K562 (cell line): ENCODE measurements at regions of chr5 and their contacts with region 1.

Region 1: DNA sequence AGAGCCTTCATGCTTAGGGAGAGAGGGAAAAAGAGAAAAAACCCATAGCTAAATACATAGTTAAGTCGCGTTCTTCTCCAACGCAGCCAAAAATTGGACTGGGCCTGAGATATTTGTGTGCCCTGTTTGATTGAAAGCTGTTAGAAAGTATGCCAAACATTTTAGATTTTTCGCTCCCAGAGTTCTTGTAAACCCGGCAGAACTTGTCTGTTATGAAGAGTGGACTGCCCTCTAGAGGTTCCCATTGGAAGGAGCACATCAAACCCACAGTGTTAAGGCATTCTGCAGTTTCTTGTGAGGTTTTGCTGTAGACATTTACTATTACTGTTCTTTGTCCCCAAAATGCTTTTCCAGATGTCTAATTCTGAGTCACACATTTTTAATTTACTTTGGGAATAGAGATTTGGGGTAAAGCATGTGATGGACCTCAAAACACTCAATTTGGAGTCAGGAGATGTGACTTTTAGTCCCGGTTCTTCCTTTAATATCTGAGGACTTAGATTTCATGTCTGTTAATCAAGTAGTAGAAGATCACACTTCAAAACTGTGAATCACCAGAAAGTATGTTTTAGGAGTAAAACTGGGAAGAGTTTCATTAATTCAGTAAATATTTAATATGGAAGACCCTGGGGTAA is 96.6 kb downstream of the PCSK1 start:
- DNase-seq: peak; percentile 42 to 80 (median 48)
- ATAC-seq: peak; percentile 95
- H3K4me3 ChIP-seq: no peak overlapping the region
- H3K27ac ChIP-seq: no peak overlapping the region
- H3K4me1 ChIP-seq: peaks cover 0 to 4% of the 10 kb centered on the region in 2 experiments; a peak in 2 of 5 replicates
- H3K27me3 ChIP-seq: peaks cover 5 to 12% of the 10 kb centered on the region in 2 experiments; a peak in 4 of 5 replicates
- CTCF ChIP-seq: peak; percentile 72 to 90 (median 82)
- EP300 ChIP-seq: no peak
- POLR2A ChIP-seq: no peak
- RAD21 ChIP-seq: peak; percentile 90 to 91

Region 2: DNA sequence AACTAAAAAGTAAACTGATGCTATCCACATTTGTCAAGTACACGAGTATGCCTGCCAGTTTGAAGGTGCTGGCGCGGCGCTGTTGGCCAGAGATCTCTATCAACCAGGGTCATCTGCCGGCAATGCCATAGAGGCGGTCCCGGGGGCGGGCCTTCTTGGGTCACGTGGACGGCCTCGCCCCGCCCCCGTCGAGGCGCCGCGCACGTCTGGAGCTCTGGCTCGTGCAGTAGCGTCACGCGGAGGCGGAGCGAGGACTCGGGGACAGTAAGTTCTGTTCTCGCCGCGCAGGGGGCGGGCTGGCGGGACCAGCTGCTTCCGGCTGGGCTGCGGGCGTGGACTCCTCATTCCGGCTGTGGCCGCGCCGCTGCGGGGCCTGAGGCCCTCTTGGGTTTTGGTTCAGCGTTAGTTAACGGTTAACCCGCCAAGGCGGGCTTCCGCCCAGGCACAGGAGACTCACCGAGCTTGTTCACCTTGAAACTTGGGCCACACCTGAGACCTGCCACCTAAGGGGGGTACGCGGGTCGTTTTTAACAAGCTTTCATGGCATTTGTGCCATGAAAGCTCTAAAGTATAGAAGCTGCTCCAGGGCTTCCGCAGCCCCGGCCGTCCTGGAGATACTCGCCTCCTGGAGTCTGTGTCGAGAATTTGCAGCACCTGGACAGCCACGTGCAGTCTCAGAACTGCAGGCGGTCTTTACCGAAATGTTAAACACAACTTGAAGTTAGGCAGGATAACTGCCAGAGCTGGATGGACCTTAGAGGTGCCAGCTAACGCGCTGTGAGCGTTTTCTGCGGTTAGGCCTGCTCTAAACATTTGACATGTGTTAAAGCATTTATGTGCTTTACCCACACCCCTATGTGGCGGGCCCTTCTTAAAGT is 689.7 kb before region 1 on chr5 and contains the start of gene RFESD:
- CTCF ChIA-PET with region 1: no interaction called
- POLR2A ChIA-PET with region 1: no interaction called
- in situ Hi-C with region 1: loop called (anchors 25 kb)
- intact Hi-C with region 1: loop called (anchors 5 kb)
- DNase-seq: peak; percentile 92 to 99 (median 94)
- ATAC-seq: peak; percentile 89
- H3K4me3 ChIP-seq: peak within 1 kb of the TSS; percentile 49
- H3K27ac ChIP-seq: peak within 1 kb of the TSS; percentile 95
- H3K4me1 ChIP-seq: peaks cover 13 to 18% of the 10 kb centered on the region in 2 experiments
- H3K27me3 ChIP-seq: no peaks in the 10 kb centered on the region
- CTCF ChIP-seq: peak in 1 of 3 experiments; percentile 27; a peak in 2 of 6 replicates
- EP300 ChIP-seq: peak; percentile 52; the same call in 1 of the 2 replicates
- POLR2A ChIP-seq: peak; percentile 95
- RAD21 ChIP-seq: no peak; a peak in 2 of 4 replicates
- polyA plus RNA-seq, gene RFESD: 506 to 600 TPM

Region 3: GRCh38 chr5:95781101-95781583 is 555.3 kb before region 1 on chr5:
- CTCF ChIA-PET with region 1: interaction called, 5 read pairs
- POLR2A ChIA-PET with region 1: no interaction called
- in situ Hi-C with region 1: no loop called
- intact Hi-C with region 1: loop called (anchors 5 kb)
- DNase-seq: peak in 3 of 4 experiments; percentile 35 to 79 (median 59)
- ATAC-seq: peak; percentile 97
- H3K4me3 ChIP-seq: no peak overlapping the region
- H3K27ac ChIP-seq: no peak overlapping the region
- H3K4me1 ChIP-seq: no peaks in the 10 kb centered on the region; a peak in 1 of 5 replicates
- H3K27me3 ChIP-seq: no peaks in the 10 kb centered on the region
- CTCF ChIP-seq: peak; percentile 84 to 97 (median 92)
- EP300 ChIP-seq: no peak
- POLR2A ChIP-seq: no peak; the same call in 1 of the 2 replicates
- RAD21 ChIP-seq: peak; percentile 89 to 93

Region 4: GRCh38 chr5:95858661-95859326 is 477.7 kb before region 1 on chr5:
- CTCF ChIA-PET with region 1: interaction called, 26 read pairs
- POLR2A ChIA-PET with region 1: no interaction called
- in situ Hi-C with region 1: loop called (anchors 5 kb)
- intact Hi-C with region 1: loop called (anchors 1 kb)
- DNase-seq: peak; percentile 88 to 90 (median 89)
- ATAC-seq: peak; percentile 97
- H3K4me3 ChIP-seq: no peak overlapping the region
- H3K27ac ChIP-seq: no peak overlapping the region
- H3K4me1 ChIP-seq: peaks cover 12 to 15% of the 10 kb centered on the region in 2 experiments; a peak in 4 of 5 replicates
- H3K27me3 ChIP-seq: 0 out of 5 replicates have a peak, but pooled peaks cover 0 to 4% of the 10 kb centered on the region in 2 experiments
- CTCF ChIP-seq: peak; percentile 90 to 97 (median 97)
- EP300 ChIP-seq: no peak
- POLR2A ChIP-seq: no peak
- RAD21 ChIP-seq: peak; percentile 97 to 99

Region 5: GRCh38 chr5:95892780-95893354 is 443.6 kb before region 1 on chr5:
- CTCF ChIA-PET with region 1: interaction called, 7 read pairs
- POLR2A ChIA-PET with region 1: no interaction called
- in situ Hi-C with region 1: no loop called
- intact Hi-C with region 1: loop called (anchors 1 kb)
- DNase-seq: peak; percentile 28 to 65 (median 48)
- ATAC-seq: peak; percentile 99
- H3K4me3 ChIP-seq: no peak overlapping the region
- H3K27ac ChIP-seq: no peak overlapping the region
- H3K4me1 ChIP-seq: no peaks in the 10 kb centered on the region
- H3K27me3 ChIP-seq: no peaks in the 10 kb centered on the region
- CTCF ChIP-seq: peak; percentile 58 to 79 (median 61)
- EP300 ChIP-seq: no peak
- POLR2A ChIP-seq: no peak
- RAD21 ChIP-seq: peak; percentile 80 to 88

Region 6: DNA sequence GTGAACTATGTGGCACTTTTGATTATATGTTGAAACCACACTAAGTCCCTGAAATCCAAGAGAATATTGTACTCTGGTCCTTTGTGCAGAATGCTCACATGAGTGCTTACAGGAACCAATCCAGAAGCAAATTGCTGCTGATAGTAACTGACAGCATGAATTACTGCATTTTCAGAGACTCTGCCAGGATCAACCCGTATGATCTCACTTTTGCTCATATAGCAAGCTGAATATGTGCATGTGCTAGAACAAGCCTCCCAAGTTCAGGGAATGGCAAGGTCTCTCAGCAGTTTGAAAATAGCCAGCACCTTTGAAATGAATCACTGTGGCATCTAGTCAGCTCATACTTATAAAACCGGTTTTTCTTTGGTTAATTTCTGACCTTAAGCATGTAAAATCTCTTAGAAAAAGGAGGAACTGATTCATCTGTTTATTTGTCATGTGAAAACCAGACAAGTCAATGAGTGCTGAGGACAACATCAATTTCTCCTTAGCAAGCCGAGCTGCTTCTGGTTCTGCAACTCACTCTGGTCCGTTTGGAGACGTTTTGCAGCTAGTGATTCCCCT is 159.1 kb before region 1 on chr5:
- CTCF ChIA-PET with region 1: no interaction called
- POLR2A ChIA-PET with region 1: no interaction called
- in situ Hi-C with region 1: no loop called
- intact Hi-C with region 1: loop called (anchors 10 kb)
- DNase-seq: no peak
- ATAC-seq: no peak
- H3K4me3 ChIP-seq: no peak overlapping the region
- H3K27ac ChIP-seq: no peak overlapping the region
- H3K4me1 ChIP-seq: no peaks in the 10 kb centered on the region; a peak in 1 of 5 replicates
- H3K27me3 ChIP-seq: peaks cover 6% of the 10 kb centered on the region in 2 experiments; a peak in 2 of 5 replicates
- CTCF ChIP-seq: no peak
- EP300 ChIP-seq: no peak
- POLR2A ChIP-seq: no peak
- RAD21 ChIP-seq: no peak